Naive thymus-derived CD4-positive, alpha-beta T cell (primary cell): ENCODE measurements at regions of chrX and their contacts with region 1.

Region 1: DNA sequence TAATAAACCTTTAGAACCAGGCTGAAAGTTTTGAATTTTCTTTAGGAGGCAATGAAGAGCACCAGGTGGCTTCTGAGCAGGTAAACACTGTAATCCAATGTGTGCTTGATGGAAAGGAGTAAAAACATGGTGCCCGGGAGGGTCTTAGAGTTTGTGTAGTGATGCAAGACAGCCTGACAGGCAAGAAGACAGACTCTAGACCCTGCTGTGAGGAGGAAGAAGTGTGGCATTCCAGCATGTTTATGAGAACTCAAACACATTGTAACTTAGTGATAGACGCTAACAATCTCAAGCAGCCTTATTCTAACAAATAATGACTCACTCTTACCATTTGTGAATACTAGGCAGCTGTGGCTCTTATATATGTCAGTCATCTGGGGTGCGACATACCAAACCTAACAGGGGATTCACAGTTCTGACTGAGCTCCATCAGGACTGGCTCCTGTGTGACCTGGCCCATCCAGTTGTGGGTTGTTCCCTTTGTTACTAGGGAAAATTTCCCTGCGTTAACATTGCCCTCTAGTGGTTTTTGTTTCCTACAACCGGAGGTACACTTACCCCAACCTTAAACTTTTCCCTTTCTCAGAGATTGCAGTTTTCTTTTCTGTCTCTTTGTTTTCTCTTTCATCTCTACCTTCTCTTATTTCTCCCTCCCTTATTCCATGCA is 53.8 kb downstream of the VSIG4 start:
- DNase-seq: peak in 8 of 9 donors; percentile 28 to 61 (median 46)
- ATAC-seq: peak; percentile 92
- H3K4me3 ChIP-seq: no peak overlapping the region
- H3K4me3 Mint-ChIP-seq: peak overlapping the region in 1 of 10 donors; percentile 15
- H3K27ac ChIP-seq: no peak overlapping the region
- H3K27ac Mint-ChIP-seq: peak overlapping the region in 5 of 9 donors; percentile 51 to 83 (median 61)
- H3K4me1 ChIP-seq: peaks cover 0 to 20% of the 10 kb centered on the region in 2 donors
- H3K4me1 Mint-ChIP-seq: peaks cover 7 to 32% (median 26%) of the 10 kb centered on the region in 7 donors
- H3K27me3 ChIP-seq: no peaks in the 10 kb centered on the region
- H3K27me3 Mint-ChIP-seq: no peaks in the 10 kb centered on the region

Region 2: DNA sequence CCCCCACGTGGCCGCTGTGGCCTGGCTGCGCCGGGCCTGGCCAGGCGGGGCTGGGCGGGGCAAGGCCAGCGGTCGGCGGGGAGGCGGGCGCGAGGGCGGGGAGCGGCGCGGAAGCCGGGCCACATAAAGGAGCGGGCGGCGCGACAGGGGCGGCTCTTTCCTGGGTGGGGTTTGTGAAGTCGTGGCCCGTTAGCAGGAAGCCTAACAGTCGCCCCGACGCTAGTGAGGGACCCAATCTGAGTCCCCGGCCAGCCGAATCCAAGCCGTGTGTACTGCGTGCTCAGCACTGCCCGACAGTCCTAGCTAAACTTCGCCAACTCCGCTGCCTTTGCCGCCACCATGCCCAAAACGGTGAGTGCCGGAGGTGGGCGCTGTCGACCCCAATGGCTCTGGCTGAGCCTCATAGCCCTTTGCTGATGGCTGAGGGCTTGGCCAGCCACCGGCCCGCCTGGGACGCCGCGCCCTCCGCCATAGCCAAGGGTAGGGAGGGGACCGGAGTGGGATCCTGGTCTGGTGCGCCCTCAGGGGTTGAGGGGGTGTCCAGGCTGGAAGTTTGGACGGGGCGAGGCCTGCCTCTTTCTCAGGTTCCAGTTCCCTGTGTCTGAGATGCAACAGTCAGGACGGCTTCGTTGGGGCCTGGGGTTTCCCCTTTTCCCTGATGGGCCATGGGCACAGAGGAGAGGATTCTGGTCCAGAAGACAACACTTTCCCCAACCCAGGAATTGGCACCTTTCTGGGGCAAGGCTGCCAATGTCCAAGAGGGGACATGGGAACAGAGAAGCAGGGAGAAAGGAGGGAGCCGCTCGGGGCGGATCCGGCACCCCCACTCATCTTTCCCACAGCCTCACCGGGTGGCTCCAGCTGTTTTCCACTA is 318.3 kb before region 1 on chrX and contains the start of gene MSN:
- CTCF ChIA-PET with region 1: no interaction called
- POLR2A ChIA-PET with region 1: no interaction called
- intact Hi-C with region 1: loop called (anchors 1 to 5 kb)
- DNase-seq: peak; percentile 46 to 81 (median 65)
- ATAC-seq: peak; percentile 92
- H3K4me3 ChIP-seq: peak within 1 kb of the TSS; percentile 81
- H3K4me3 Mint-ChIP-seq: peak within 1 kb of the TSS; percentile 88 to 99 (median 95)
- H3K27ac ChIP-seq: peak within 1 kb of the TSS; percentile 79
- H3K27ac Mint-ChIP-seq: peak within 1 kb of the TSS; percentile 80 to 97 (median 93)
- H3K4me1 ChIP-seq: peaks cover 11 to 12% of the 10 kb centered on the region in 2 donors
- H3K4me1 Mint-ChIP-seq: peaks cover 29 to 41% (median 34%) of the 10 kb centered on the region in 7 donors
- H3K27me3 ChIP-seq: no peaks in the 10 kb centered on the region
- H3K27me3 Mint-ChIP-seq: no peaks in the 10 kb centered on the region
- total RNA-seq, gene MSN: 267 to 635 (median 274) TPM

Region 3: GRCh38 chrX:65697915-65698796 is 287.9 kb before region 1 on chrX:
- CTCF ChIA-PET with region 1: no interaction called
- POLR2A ChIA-PET with region 1: interaction called, 3 read pairs
- intact Hi-C with region 1: loop called in 1 of 2 experiments (anchors 10 kb)
- DNase-seq: peak; percentile 8 to 81 (median 78)
- ATAC-seq: peak; percentile 84
- H3K4me3 ChIP-seq: peak overlapping the region; percentile 36
- H3K4me3 Mint-ChIP-seq: peak overlapping the region; percentile 73 to 93 (median 86)
- H3K27ac ChIP-seq: peak overlapping the region; percentile 68
- H3K27ac Mint-ChIP-seq: peak overlapping the region; percentile 91 to 98 (median 93)
- H3K4me1 ChIP-seq: peaks cover 70 to 77% of the 10 kb centered on the region in 2 donors
- H3K4me1 Mint-ChIP-seq: peaks cover 34 to 100% (median 85%) of the 10 kb centered on the region in 7 donors
- H3K27me3 ChIP-seq: no peaks in the 10 kb centered on the region
- H3K27me3 Mint-ChIP-seq: no peaks in the 10 kb centered on the region

Region 4: GRCh38 chrX:65750674-65751469 is 235.2 kb before region 1 on chrX:
- CTCF ChIA-PET with region 1: interaction called, 3 read pairs
- POLR2A ChIA-PET with region 1: no interaction called
- intact Hi-C with region 1: loop called (anchors 1 to 5 kb)
- DNase-seq: peak in 7 of 9 donors; percentile 14 to 49 (median 34)
- ATAC-seq: peak; percentile 77
- H3K4me3 ChIP-seq: no peak overlapping the region
- H3K4me3 Mint-ChIP-seq: peak overlapping the region; percentile 55 to 81 (median 74)
- H3K27ac ChIP-seq: no peak overlapping the region
- H3K27ac Mint-ChIP-seq: peak overlapping the region; percentile 57 to 85 (median 76)
- H3K4me1 ChIP-seq: peaks cover 15 to 21% of the 10 kb centered on the region in 2 donors
- H3K4me1 Mint-ChIP-seq: peaks cover 30 to 80% (median 63%) of the 10 kb centered on the region in 7 donors
- H3K27me3 ChIP-seq: no peaks in the 10 kb centered on the region
- H3K27me3 Mint-ChIP-seq: no peaks in the 10 kb centered on the region

Region 5: DNA sequence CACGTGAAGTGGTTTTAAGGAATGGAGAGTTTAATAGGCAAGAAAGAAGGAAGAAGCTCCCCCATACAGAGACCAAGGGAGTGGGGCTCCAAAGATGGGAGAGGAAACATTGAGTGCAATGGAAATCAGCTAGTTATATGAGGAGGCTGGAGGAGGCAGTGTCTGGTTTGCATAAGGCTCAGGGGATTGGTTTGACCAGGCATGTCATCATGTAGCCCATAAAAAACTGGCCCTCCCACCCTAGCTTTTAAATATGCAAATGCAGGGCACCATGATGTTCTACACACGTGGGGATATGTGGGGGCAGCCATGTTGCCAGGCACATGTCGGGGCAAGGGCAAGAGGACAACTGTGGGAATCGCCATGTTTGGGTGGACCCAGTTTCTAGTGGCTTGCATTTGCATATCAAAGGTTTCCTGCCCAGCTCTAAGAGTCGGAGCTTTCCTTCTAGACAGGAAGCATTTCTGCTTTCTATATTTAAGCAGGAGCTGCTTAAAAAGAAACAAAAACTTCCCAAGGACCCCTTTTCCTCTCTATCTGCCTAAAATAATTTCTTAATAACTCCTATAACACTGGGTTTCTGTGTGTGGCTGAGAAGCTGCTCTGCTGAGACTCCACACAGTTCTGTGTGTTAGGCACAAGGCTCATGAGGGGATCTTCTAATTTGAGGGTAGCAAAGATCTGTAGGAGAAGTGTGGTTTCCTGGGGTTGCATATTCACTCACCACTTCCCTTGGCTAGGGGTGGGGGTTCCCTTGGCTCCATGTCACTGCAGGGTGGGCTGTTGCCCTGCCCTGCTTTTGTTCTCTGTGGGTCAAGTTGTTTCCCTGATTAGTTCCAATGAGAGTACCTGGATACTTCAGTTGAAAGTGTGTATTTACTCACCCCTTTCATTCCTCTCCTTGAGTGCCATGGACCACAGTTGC is 59.7 kb before region 1 on chrX:
- CTCF ChIA-PET with region 1: no interaction called
- POLR2A ChIA-PET with region 1: no interaction called
- intact Hi-C with region 1: loop called in 1 of 2 experiments (anchors 1 kb)
- DNase-seq: peak in 7 of 9 donors; percentile 13 to 75 (median 54)
- ATAC-seq: peak; percentile 75
- H3K4me3 ChIP-seq: peak overlapping the region; percentile 31
- H3K4me3 Mint-ChIP-seq: peak overlapping the region; percentile 37 to 84 (median 70)
- H3K27ac ChIP-seq: peak overlapping the region; percentile 37
- H3K27ac Mint-ChIP-seq: peak overlapping the region; percentile 15 to 93 (median 73)
- H3K4me1 ChIP-seq: peaks cover 22 to 32% of the 10 kb centered on the region in 2 donors
- H3K4me1 Mint-ChIP-seq: peaks cover 33 to 71% (median 61%) of the 10 kb centered on the region in 7 donors
- H3K27me3 ChIP-seq: no peaks in the 10 kb centered on the region
- H3K27me3 Mint-ChIP-seq: no peaks in the 10 kb centered on the region

Region 6: DNA sequence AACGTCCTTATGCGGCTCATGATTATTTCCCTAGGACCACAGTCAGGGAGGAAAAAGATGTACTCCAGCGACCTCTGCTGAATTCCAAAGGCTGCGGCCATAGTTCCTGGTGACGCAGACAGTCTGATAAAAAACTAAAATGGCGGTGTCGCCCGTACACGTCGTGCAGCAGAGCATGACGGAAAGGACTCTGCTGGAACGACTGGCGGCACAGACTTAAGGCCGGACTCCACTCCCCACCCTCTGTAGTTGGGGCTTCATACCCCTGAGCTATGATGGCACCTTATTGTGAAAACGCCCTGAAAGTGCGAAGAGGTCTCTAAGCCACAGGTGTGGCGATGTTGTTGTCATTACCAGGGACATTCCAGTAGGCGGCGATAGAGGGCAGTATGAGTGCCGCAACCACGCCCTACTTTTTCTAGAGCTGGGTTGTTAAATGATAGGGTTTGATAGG is 742.8 kb after region 1 on chrX:
- CTCF ChIA-PET with region 1: no interaction called
- POLR2A ChIA-PET with region 1: no interaction called
- intact Hi-C with region 1: loop called in 1 of 2 experiments (anchors 1 kb)
- DNase-seq: peak; percentile 25 to 75 (median 68)
- ATAC-seq: peak; percentile 91
- H3K4me3 ChIP-seq: peak overlapping the region; percentile 82
- H3K4me3 Mint-ChIP-seq: peak overlapping the region; percentile 70 to 96 (median 92)
- H3K27ac ChIP-seq: peak overlapping the region; percentile 67
- H3K27ac Mint-ChIP-seq: peak overlapping the region; percentile 85 to 100 (median 97)
- H3K4me1 ChIP-seq: no peaks in the 10 kb centered on the region
- H3K4me1 Mint-ChIP-seq: peaks cover 0 to 8% (median 0%) of the 10 kb centered on the region in 7 donors
- H3K27me3 ChIP-seq: no peaks in the 10 kb centered on the region
- H3K27me3 Mint-ChIP-seq: no peaks in the 10 kb centered on the region